ENCODE measurements at regions of chr16 and their contacts with region 1.

Region 1: DNA sequence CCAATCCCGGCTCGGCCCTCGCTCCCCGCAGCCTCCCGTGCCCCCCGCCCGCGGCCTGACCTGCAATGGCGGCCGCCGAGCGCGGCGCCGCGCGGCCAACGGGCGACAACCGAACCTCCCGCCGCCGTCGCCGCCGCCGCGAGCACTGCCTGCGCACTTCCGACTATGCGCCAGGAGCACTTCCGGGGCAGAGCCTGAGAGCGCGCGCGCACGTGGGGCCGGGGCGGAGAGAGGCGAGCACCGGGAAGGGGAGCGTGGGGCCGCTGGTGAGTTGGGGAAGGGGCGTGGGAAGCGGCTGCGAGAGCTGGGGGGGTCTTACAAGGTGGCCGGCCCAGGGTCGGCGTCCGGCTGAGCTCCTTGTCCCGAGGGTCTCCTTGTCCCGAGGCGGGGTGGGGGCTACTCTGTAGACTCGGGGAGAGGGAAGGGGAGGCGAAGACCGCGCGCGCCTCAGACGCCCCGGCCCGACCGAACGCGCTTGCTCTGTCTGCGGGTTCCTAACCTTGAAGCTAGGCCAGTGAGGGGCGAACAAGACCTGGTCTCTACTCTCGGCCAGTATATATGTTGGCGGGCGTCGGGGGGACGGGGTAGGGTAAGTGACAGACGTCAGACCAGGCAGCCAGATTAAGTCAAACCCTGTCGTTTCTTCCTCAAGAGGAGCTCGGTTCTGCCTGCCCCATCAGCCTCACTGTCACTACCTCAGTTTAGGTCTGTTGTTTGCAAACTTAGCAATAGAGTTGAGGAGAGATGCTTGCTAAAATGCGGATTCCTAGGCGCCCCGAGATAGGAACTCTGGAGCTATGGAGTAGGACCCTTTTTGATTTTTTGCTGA is at the starts of genes CHTF8 and UTP4:
- DNase-seq: peak; percentile 75 to 90 (median 84)
- ATAC-seq: peak; percentile 89 to 93
- H3K4me3 Mint-ChIP-seq: peak within 1 kb of the TSS; percentile 91 to 97 (median 94)
- H3K27ac Mint-ChIP-seq: peak within 1 kb of the TSS; percentile 85 to 98 (median 96)
- H3K4me1 Mint-ChIP-seq: peaks cover 28 to 56% (median 50%) of the 10 kb centered on the region in 4 donors
- H3K27me3 Mint-ChIP-seq: no peaks in the 10 kb centered on the region
- polyA plus RNA-seq, gene CHTF8: 165 to 192 (median 184) TPM
- polyA plus RNA-seq, gene UTP4: 72.4 to 77.6 (median 72.8) TPM

Region 2: GRCh38 chr16:69105489-69106361 is 26.9 kb before region 1 on chr16 and contains the start of gene HAS3:
- POLR2A ChIA-PET with region 1: no interaction called
- DNase-seq: peak in 5 of 10 donors; percentile 4 to 31 (median 19)
- ATAC-seq: peak; percentile 64 to 65
- H3K4me3 Mint-ChIP-seq: peak within 1 kb of the TSS; percentile 84 to 94 (median 91)
- H3K27ac Mint-ChIP-seq: peak within 1 kb of the TSS in 1 of 10 donors; percentile 78
- H3K4me1 Mint-ChIP-seq: peaks cover 8 to 27% (median 24%) of the 10 kb centered on the region in 4 donors
- H3K27me3 Mint-ChIP-seq: peaks cover 8 to 59% (median 35%) of the 10 kb centered on the region in 5 donors
- polyA plus RNA-seq, gene HAS3: 0.07 to 0.55 (median 0.11) TPM

Region 3: GRCh38 chr16:69157196-69157595 is 24.6 kb after region 1 on chr16:
- POLR2A ChIA-PET with region 1: no interaction called
- DNase-seq: no peak
- ATAC-seq: no peak
- H3K4me3 Mint-ChIP-seq: no peak overlapping the region
- H3K27ac Mint-ChIP-seq: peak overlapping the region in 1 of 10 donors; percentile 17
- H3K4me1 Mint-ChIP-seq: peaks cover 0 to 4% (median 2%) of the 10 kb centered on the region in 4 donors
- H3K27me3 Mint-ChIP-seq: no peaks in the 10 kb centered on the region

Region 4: GRCh38 chr16:69186642-69187445 is 54.2 kb after region 1 on chr16 and contains the start of gene SNTB2:
- POLR2A ChIA-PET with region 1: interaction called, 17 read pairs
- DNase-seq: peak; percentile 61 to 87 (median 78)
- ATAC-seq: peak; percentile 77 to 82
- H3K4me3 Mint-ChIP-seq: peak within 1 kb of the TSS; percentile 97 to 100 (median 99)
- H3K27ac Mint-ChIP-seq: peak within 1 kb of the TSS; percentile 85 to 99 (median 98)
- H3K4me1 Mint-ChIP-seq: peaks cover 28 to 53% (median 45%) of the 10 kb centered on the region in 4 donors
- H3K27me3 Mint-ChIP-seq: no peaks in the 10 kb centered on the region
- polyA plus RNA-seq, gene SNTB2: 3.7 to 15.0 (median 7.6) TPM

Measured in naive thymus-derived CD8-positive, alpha-beta T cell (primary cell).